ENCODE measurements at regions of chr2 and their contacts with region 1.

Region 1: GRCh38 chr2:54330162-54330925 is 74.3 kb upstream of the TSPYL6 start:
- DNase-seq: peak; percentile 94 to 98 (median 97)
- H3K4me3 ChIP-seq: peak overlapping the region; percentile 53 to 85 (median 72)
- H3K27ac ChIP-seq: peak overlapping the region; percentile 70 to 100 (median 96)
- H3K27me3 ChIP-seq: no peaks in the 10 kb centered on the region
- CTCF ChIP-seq: peak in 15 of 56 donors; percentile 9 to 47 (median 27)

Region 2: GRCh38 chr2:54206596-54206995 is 123.7 kb before region 1 on chr2:
- intact Hi-C with region 1: loop called (anchors 5 kb)
- DNase-seq: no peak
- H3K4me3 ChIP-seq: peak overlapping the region in 15 of 59 donors; percentile 2 to 41 (median 22)
- H3K27ac ChIP-seq: peak overlapping the region in 12 of 59 donors; percentile 4 to 48 (median 24)
- H3K27me3 ChIP-seq: no peaks in the 10 kb centered on the region
- CTCF ChIP-seq: peak; percentile 57 to 91 (median 78)

Region 3: DNA sequence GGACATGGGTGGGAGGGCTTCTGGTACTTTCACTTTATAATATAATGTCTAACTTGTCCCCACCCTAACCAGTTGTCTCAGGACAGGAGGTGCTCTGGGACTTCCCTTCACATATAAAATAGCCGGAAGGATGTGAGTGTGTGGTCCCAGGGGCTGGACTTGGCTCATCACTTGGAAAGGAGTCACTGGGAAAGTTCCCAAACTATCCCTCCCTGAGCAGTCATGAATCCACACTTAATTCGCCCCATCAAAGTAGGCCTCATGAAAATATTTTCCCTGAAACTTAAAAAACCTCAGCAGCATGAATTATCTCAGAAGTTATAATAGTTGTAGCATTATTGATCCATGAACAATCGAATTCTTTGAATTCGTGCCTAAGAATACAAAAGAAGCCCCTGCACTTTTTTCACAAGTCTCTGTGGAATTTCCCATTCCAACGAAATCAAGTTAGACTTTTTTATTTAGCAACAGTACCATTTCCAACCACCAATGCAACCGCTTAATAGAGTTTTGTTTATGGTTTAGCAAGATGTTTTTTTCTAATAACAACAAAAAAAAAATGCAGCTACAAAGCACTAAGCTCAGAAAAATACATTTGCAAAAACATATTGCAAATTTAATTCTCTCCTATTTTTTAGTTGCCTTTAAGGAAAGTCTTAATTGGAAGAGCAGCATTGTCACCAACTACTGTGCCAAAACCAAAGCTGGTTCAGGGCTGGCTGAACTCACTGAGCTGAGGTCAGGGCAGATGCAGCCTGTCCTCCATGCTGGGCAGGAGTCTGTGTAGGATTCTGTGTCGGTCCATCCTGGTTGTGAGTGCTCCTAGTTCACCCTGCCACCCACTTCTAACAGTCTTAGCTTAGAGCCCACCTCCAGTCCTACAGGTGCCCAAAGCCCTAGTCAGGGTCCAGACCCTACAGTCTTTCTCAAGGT is 57.0 kb after region 1 on chr2:
- intact Hi-C with region 1: loop called in 1 of 2 experiments (anchors 2 kb)
- DNase-seq: no peak
- H3K4me3 ChIP-seq: no peak overlapping the region
- H3K27ac ChIP-seq: peak overlapping the region in 48 of 59 donors; percentile 2 to 98 (median 72)
- H3K27me3 ChIP-seq: no peaks in the 10 kb centered on the region
- CTCF ChIP-seq: peak in 16 of 56 donors; percentile 0 to 39 (median 19)

Region 4: DNA sequence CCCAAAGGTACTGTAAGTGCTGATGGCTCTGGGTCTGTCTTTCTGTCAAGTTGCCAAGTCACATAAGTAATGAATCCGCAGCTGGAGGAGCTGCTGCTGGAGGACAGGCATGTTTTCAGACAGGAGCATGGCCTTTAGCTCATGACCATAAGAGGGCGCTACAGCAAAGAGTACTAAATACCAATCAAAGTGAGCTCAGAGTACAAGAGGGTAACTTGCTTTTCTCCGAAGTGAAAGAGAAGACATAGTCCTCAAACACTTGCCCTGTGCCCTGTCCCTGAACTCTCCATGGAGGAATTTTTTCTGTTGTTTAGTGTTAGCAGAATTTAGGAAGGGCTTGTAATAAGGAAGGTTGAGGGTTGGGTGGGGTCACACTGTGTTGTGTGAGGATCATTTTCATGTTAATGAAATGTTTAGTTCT is 335.1 kb after region 1 on chr2:
- intact Hi-C with region 1: loop called (anchors 5 to 10 kb)
- DNase-seq: no peak
- H3K4me3 ChIP-seq: peak overlapping the region in 1 of 59 donors; percentile 17
- H3K27ac ChIP-seq: peak overlapping the region; percentile 55 to 98 (median 93)
- H3K27me3 ChIP-seq: no peaks in the 10 kb centered on the region
- CTCF ChIP-seq: peak in 51 of 56 donors; percentile 23 to 65 (median 46)

Region 5: DNA sequence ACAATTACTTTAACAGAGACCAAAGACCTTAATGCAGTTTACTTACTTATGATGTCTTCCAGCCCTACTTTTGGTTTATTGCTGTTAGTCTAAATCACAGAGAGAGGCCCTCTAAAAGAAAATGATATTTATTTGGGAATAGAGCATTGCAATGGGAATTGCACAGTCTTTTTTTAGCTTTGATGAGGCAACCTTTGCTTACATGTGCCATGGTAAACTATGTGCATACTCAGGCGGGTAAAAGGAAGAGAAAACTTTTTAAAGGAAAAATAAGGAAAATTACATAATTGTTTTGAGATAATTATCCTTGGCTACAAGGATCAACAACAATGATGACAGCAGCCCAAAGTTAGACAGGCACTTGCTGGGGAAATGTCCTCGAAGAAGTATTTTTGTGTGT is 1514.6 kb after region 1 on chr2:
- intact Hi-C with region 1: no loop called
- DNase-seq: no peak
- H3K4me3 ChIP-seq: no peak overlapping the region
- H3K27ac ChIP-seq: no peak overlapping the region
- H3K27me3 ChIP-seq: peaks cover 0 to 2% (median 0%) of the 10 kb centered on the region in 45 donors
- CTCF ChIP-seq: no peak